Activated naive CD4-positive, alpha-beta T cell treated with anti-CD3 and anti-CD28 coated beads, Interleukin-2, amount 10 ng/mL, durations not matched to agents 7 days and 5 days (primary cell): ENCODE measurements at regions of chr7 and their contacts with region 1.

Region 1: GRCh38 chr7:143334244-143334643 is 18.3 kb downstream of the CLCN1 start:
- DNase-seq: no peak
- H3K4me3 Mint-ChIP-seq: no peak overlapping the region
- H3K27ac Mint-ChIP-seq: no peak overlapping the region
- H3K4me1 Mint-ChIP-seq: no peaks in the 10 kb centered on the region
- H3K27me3 Mint-ChIP-seq: peaks cover 49% of the 10 kb centered on the region

Region 2: GRCh38 chr7:143345428-143345900 is 11.2 kb after region 1 on chr7:
- CTCF ChIA-PET with region 1: interaction called, 19 read pairs
- DNase-seq: peak; percentile 78
- H3K4me3 Mint-ChIP-seq: peak overlapping the region; percentile 56
- H3K27ac Mint-ChIP-seq: no peak overlapping the region
- H3K4me1 Mint-ChIP-seq: peaks cover 9% of the 10 kb centered on the region
- H3K27me3 Mint-ChIP-seq: peaks cover 53% of the 10 kb centered on the region